ENCODE measurements at regions of chr19 and their contacts with region 1.

Region 1: GRCh38 chr19:44607049-44607448 is 6.3 kb upstream of the IGSF23 start:
- DNase-seq: no peak
- H3K4me3 ChIP-seq: no peak overlapping the region
- H3K4me3 Mint-ChIP-seq: no peak overlapping the region
- H3K27ac Mint-ChIP-seq: no peak overlapping the region
- H3K4me1 ChIP-seq: peaks cover 38% of the 10 kb centered on the region
- H3K4me1 Mint-ChIP-seq: peaks cover 36% of the 10 kb centered on the region
- H3K27me3 ChIP-seq: no peaks in the 10 kb centered on the region
- H3K27me3 Mint-ChIP-seq: no peaks in the 10 kb centered on the region
- CTCF ChIP-seq: no peak

Region 2: DNA sequence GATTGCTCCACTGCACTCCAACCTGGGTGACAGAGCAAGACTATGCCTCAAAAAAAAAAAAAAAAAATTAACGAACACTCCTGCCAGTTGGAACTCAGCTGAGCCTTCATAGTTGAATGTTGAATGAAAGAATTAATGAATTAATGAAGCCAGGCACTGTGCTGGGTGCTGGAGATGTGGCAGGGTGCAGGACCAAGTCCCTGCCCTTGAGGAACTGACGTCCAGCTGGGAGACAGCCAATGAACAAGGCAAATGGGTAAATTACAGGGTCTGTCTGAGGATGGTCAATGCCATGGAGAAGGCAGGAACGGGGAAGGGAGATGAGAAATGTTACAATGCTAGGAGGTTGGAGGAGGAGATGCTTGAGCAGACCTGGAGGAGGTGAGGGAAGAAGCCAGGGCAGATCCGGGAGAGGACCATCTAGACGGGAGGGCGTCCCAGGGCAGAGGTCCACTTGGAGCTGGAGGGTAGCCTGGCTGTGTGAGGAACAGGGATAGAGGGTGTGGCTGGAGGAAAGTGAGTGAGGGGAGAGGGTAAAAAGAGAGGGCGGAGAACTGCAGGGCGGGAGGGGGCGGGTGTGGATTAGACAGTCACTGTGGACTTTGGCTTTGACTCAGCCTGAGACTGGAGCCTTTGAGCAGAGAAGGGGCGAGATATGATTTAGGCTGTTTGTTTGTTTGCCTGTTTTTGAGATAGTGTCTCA is 10.5 kb before region 1 on chr19:
- CTCF ChIA-PET with region 1: interaction called, 6 read pairs
- POLR2A ChIA-PET with region 1: no interaction called
- intact Hi-C with region 1: loop called (anchors 2 kb)
- DNase-seq: peak; percentile 80 to 86
- H3K4me3 ChIP-seq: no peak overlapping the region
- H3K4me3 Mint-ChIP-seq: peak overlapping the region; percentile 25
- H3K27ac Mint-ChIP-seq: peak overlapping the region; percentile 40
- H3K4me1 ChIP-seq: peaks cover 57% of the 10 kb centered on the region
- H3K4me1 Mint-ChIP-seq: peaks cover 53% of the 10 kb centered on the region
- H3K27me3 ChIP-seq: no peaks in the 10 kb centered on the region
- H3K27me3 Mint-ChIP-seq: no peaks in the 10 kb centered on the region
- CTCF ChIP-seq: no peak

Region 3: DNA sequence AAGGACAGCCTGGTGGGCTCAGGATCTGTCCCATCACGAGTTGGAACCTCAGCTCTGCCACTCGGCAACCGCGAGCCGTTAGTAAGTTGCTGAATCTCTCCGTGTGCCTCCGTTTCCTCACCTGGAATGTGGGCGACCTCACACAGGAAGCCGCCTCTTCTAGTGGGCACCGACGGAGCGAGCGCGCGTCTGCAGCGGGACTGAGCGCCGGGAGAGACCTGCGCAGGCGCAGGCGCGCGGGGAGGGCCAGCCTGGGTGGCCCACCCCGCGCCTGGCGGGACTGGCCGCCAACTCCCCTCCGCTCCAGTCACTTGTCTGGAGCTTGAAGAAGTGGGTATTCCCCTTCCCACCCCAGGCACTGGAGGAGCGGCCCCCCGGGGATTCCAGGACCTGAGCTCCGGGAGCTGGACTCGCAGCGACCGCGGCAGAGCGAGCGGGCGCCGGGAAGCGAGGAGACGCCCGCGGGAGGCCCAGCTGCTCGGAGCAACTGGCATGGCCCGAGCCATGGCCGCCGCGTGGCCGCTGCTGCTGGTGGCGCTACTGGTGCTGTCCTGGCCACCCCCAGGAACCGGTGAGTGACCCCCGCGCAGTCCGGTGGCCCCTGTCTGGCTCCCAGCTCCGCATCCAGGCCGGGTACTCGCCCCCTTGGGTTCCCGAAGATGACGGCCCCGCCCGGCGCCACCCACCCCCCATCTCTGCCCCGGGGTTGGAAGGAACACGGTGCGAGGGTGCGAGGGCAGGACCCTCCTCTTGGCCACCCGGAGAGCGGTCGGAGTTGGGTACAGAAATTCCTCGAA is 36.8 kb after region 1 on chr19 and contains the start of gene PVR:
- CTCF ChIA-PET with region 1: interaction called, 10 read pairs
- POLR2A ChIA-PET with region 1: interaction called, 5 read pairs
- intact Hi-C with region 1: no loop called
- DNase-seq: peak; percentile 76 to 85
- H3K4me3 ChIP-seq: peak within 1 kb of the TSS; percentile 91
- H3K4me3 Mint-ChIP-seq: peak within 1 kb of the TSS; percentile 83
- H3K27ac Mint-ChIP-seq: peak within 1 kb of the TSS; percentile 79
- H3K4me1 ChIP-seq: peaks cover 31% of the 10 kb centered on the region
- H3K4me1 Mint-ChIP-seq: peaks cover 27% of the 10 kb centered on the region
- H3K27me3 ChIP-seq: no peaks in the 10 kb centered on the region
- H3K27me3 Mint-ChIP-seq: no peaks in the 10 kb centered on the region
- CTCF ChIP-seq: no peak
- total RNA-seq, gene PVR: 86.5 and 93.8 TPM in 2 replicates

Region 4: GRCh38 chr19:44653977-44654774 is 47.1 kb after region 1 on chr19:
- CTCF ChIA-PET with region 1: interaction called, 13 read pairs
- POLR2A ChIA-PET with region 1: interaction called, 3 read pairs
- intact Hi-C with region 1: loop called (anchors 1 kb)
- DNase-seq: peak in 1 of 2 experiments; percentile 54
- H3K4me3 ChIP-seq: no peak overlapping the region
- H3K4me3 Mint-ChIP-seq: no peak overlapping the region
- H3K27ac Mint-ChIP-seq: peak overlapping the region; percentile 31
- H3K4me1 ChIP-seq: no peaks in the 10 kb centered on the region
- H3K4me1 Mint-ChIP-seq: peaks cover 29% of the 10 kb centered on the region
- H3K27me3 ChIP-seq: no peaks in the 10 kb centered on the region
- H3K27me3 Mint-ChIP-seq: no peaks in the 10 kb centered on the region
- CTCF ChIP-seq: peak; percentile 20 to 58

Measured in Caco-2 (cell line).